Activated T-helper 2 cell treated with anti-CD3 and anti-CD28 coated beads, Interferon-gamma antibody, Interleukin-2, Interleukin-4, amounts not matched to agents 10 μg/mL and 5 μg/mL and 100 μg/mL, durations not matched to agents 14 hours and 24 hours and 36 hours (primary cell): ENCODE measurements at regions of chr15 and their contacts with region 1.

Region 1: DNA sequence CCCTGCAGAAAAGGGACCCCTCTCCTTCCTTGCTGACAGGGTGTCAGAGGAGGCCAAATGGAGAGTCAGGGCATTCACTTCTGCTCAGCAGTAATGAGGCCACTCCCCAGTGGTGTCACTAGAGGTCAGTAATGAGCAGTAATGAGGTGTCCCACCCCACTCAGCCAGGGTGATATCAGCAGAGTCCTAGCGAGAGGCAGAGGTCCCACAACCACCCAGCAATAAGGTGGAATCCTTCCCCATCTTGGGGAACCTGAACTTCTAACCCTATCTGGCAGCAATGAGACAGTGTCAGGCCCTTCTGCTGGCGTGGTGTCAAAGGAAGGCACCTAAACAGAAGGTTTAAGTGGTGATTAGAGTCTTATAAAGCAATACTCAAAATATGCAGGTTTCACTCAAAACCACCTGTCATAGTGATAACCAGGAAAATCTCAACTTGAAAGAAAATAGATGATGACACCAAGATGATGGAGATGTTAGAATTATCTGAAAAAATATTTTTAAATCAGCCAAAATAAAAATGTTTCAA is 12.9 kb downstream of the OCA2 start:
- DNase-seq: peak; percentile 41
- H3K4me3 Mint-ChIP-seq: no peak overlapping the region
- H3K27ac Mint-ChIP-seq: no peak overlapping the region
- H3K4me1 Mint-ChIP-seq: peaks cover 10% of the 10 kb centered on the region
- H3K27me3 Mint-ChIP-seq: peaks cover 31% of the 10 kb centered on the region

Region 2: GRCh38 chr15:27601239-27601960 is 484.8 kb before region 1 on chr15:
- intact Hi-C with region 1: no loop called
- DNase-seq: no peak
- H3K4me3 Mint-ChIP-seq: no peak overlapping the region
- H3K27ac Mint-ChIP-seq: no peak overlapping the region
- H3K4me1 Mint-ChIP-seq: no peaks in the 10 kb centered on the region
- H3K27me3 Mint-ChIP-seq: no peaks in the 10 kb centered on the region

Region 3: DNA sequence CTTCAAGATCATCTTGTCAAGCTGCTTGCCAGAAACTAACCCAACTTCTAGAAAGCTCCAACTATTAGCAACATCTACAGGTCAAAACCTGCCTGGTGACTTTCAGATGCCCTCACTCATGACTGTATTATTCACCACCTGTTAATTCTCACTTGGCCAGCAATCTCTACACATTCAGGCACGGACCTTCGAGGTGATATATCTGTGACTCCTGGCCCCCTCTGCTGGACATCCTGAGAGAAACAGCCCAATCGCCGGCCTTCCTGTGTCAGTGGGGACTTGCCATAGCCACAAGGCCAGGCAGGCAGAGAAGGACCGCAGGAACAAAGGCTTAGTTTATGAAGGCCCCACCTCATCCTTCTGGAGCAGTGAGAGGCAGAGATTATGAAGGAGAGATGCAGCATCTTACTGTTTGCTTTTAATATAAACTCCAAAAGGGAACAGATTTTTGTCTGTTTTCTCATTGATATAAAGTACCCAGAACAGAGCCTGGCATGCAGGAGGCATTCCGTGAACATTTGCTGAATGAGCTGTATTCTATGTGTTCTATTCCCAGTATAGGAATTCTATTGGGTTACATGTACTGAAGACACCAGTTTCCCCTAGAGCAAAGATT is 37.3 kb after region 1 on chr15:
- intact Hi-C with region 1: loop called (anchors 1 kb)
- DNase-seq: no peak
- H3K4me3 Mint-ChIP-seq: no peak overlapping the region
- H3K27ac Mint-ChIP-seq: no peak overlapping the region
- H3K4me1 Mint-ChIP-seq: no peaks in the 10 kb centered on the region
- H3K27me3 Mint-ChIP-seq: no peaks in the 10 kb centered on the region